ENCODE measurements at regions of chr1 and their contacts with region 1.

Region 1: DNA sequence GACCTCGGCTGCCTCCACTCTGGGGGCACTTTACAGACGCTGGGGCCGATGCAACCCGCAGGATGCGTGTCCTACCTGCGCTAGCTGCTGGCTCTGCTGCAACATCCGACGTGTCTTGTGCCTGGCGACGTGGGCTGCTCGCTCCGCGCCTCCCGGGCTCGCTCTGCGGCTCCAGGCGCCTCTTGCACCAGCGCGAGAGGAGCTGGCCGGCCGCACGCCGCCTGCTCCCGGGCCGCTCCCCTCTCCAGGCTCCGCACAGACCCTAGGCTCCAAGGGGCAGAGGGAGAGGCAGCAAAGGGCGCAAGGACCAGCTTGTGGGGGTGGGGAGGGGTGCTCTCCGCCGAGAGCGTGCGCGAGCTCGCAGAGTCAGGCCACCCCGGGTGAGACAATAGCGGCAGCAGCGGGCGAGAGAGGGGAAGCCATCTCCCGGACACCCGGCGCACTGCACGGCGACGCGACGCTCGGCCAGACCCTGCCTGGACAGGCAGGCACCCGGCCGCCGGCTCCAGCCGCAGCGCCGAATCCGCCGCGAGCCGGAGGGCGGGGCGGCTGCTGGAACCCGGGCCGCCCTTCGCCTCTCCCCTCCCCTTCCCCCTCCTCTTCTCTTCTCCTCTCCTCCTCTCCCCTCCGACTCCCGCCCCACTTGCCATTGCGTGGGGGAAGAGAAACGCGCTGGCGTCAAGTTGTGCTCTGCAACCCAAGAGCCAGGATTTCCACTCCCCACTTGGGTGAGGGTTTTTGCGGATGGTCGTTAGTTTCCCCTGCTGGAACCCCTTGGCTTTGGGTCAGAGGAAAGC is at the start of gene PIK3C2B:
- DNase-seq: peak; percentile 75 to 97 (median 82)

Region 2: GRCh38 chr1:204177133-204177532 is 317.3 kb before region 1 on chr1:
- intact Hi-C with region 1: no loop called
- DNase-seq: no peak

Region 3: DNA sequence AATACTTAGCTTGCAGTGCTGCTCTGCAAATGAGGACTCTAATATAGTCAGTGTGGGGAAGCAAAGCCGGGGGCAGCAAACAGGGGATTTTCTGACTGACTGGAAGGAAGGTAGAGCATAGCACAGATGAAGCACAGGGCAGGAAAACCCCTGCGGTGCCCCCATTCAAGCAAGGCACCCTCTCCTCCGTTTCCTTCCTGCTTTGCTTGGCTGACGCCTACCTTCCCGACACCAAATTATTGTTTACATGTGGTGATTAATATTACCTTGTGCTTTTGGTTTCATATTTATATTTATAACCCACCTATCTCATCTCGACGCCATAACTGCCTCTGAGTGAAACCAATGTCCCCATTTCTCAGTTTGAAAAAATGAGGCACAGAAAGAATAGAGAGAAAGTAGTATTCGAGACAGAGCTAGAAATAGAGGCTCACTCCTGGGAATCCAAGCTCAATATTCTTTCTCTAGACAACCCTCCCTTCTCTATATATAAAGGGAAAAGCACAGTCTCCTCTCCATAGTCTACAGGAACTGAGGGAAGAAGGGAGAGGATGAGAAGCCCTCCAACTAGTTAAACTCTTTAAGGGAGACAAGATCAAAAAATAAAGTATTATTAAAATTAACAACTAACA is 41.2 kb before region 1 on chr1:
- intact Hi-C with region 1: loop called (anchors 5 kb)
- DNase-seq: peak in 1 of 10 donors; percentile 9

Region 4: GRCh38 chr1:204465546-204466415 is 28.7 kb before region 1 on chr1:
- intact Hi-C with region 1: loop called (anchors 1 kb)
- DNase-seq: peak in 1 of 10 donors; percentile 84

Region 5: DNA sequence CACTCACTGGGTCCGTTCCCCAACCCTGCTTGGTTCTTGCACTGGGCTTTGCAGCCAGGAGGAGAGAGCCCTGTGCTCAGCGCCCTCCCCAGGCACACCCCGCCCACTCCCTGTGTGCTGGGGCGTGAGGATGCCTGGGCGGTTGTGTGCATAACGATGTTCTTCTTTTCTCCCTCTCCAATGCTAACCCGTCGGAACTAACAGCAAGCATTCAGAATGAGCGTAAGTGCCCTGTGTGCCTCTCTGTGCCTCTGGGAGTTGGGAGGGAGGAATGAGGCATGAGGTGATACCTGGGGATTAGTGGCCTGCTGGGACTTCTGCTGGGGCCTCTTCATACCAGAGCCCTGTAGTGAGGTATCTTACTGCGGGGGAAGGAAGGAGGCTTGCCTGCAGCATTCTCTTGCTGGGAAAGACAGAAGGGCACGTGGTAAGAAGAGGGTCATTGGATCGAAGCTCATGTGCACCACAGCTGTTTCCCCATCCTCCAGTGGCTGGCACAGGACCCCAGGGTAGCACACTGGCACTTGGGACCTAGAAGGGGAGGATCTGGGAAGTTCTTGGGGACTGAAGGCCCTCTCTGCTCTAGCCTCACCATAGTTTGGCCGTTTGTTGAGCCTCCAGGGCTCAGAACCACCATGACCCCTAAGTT is 456.0 kb after region 1 on chr1:
- intact Hi-C with region 1: no loop called
- DNase-seq: peak in 5 of 10 donors; percentile 42 to 93 (median 83)

Measured in posterior cingulate gyrus (tissue), 11 donors.